HepG2 (cell line): ENCODE measurements at regions of chr18 and their contacts with region 1.

Region 1: GRCh38 chr18:50967714-50968661 is at the start of gene ELAC1:
- DNase-seq: peak; percentile 65
- ATAC-seq: peak; percentile 98
- H3K4me3 ChIP-seq: peak within 1 kb of the TSS; percentile 59 to 84 (median 83)
- H3K27ac ChIP-seq: peak within 1 kb of the TSS; percentile 86
- H3K4me1 ChIP-seq: peaks cover 28% of the 10 kb centered on the region
- H3K27me3 ChIP-seq: no peaks in the 10 kb centered on the region; a peak in 1 of 5 replicates
- CTCF ChIP-seq: peak; percentile 38
- EP300 ChIP-seq: no peak
- POLR2A ChIP-seq: peak; percentile 75 to 83
- RAD21 ChIP-seq: peak; percentile 82
- total RNA-seq, gene ELAC1: 3.6 TPM in 2 replicates

Region 2: GRCh38 chr18:50819728-50820378 is 148.1 kb before region 1 on chr18 and contains the start of gene MRO:
- CTCF ChIA-PET with region 1: no interaction called
- POLR2A ChIA-PET with region 1: no interaction called
- in situ Hi-C with region 1: no loop called
- intact Hi-C with region 1: loop called (anchors 5 kb)
- DNase-seq: peak; percentile 58
- ATAC-seq: peak; percentile 97
- H3K4me3 ChIP-seq: peak within 1 kb of the TSS in 2 of 3 experiments; percentile 21 to 38; a peak in 4 of 6 replicates
- H3K27ac ChIP-seq: no peak within 1 kb of the TSS
- H3K4me1 ChIP-seq: peaks cover 19% of the 10 kb centered on the region
- H3K27me3 ChIP-seq: peaks cover 0 to 6% of the 10 kb centered on the region in 2 experiments; a peak in 1 of 5 replicates
- CTCF ChIP-seq: peak; percentile 98
- EP300 ChIP-seq: no peak
- POLR2A ChIP-seq: no peak
- RAD21 ChIP-seq: peak; percentile 93
- total RNA-seq, gene MRO: not detected in 2 replicates

Region 3: GRCh38 chr18:50878345-50879301 is 89.4 kb before region 1 on chr18 and contains the start of gene ME2:
- CTCF ChIA-PET with region 1: no interaction called
- POLR2A ChIA-PET with region 1: interaction called, 11 read pairs
- in situ Hi-C with region 1: no loop called
- intact Hi-C with region 1: loop called (anchors 2 kb)
- DNase-seq: peak; percentile 72
- ATAC-seq: peak; percentile 98
- H3K4me3 ChIP-seq: peak within 1 kb of the TSS; percentile 81 to 94 (median 90)
- H3K27ac ChIP-seq: peak within 1 kb of the TSS; percentile 70
- H3K4me1 ChIP-seq: peaks cover 32% of the 10 kb centered on the region
- H3K27me3 ChIP-seq: no peaks in the 10 kb centered on the region
- CTCF ChIP-seq: no peak
- EP300 ChIP-seq: no peak
- POLR2A ChIP-seq: peak; percentile 40 to 78; a peak in 3 of 4 replicates
- RAD21 ChIP-seq: no peak
- total RNA-seq, gene ME2: 20.6 and 28.2 TPM in 2 replicates

Region 4: GRCh38 chr18:51029694-51030536 is 61.9 kb after region 1 on chr18 and contains the start of gene SMAD4:
- CTCF ChIA-PET with region 1: no interaction called
- POLR2A ChIA-PET with region 1: interaction called, 27 read pairs
- in situ Hi-C with region 1: loop called (anchors 5 kb)
- intact Hi-C with region 1: loop called (anchors 2 kb)
- DNase-seq: peak; percentile 89
- ATAC-seq: peak; percentile 91
- H3K4me3 ChIP-seq: peak within 1 kb of the TSS; percentile 83 to 91 (median 91)
- H3K27ac ChIP-seq: peak within 1 kb of the TSS; percentile 94
- H3K4me1 ChIP-seq: peaks cover 53% of the 10 kb centered on the region
- H3K27me3 ChIP-seq: no peaks in the 10 kb centered on the region; a peak in 1 of 5 replicates
- CTCF ChIP-seq: no peak; the same call in 1 of the 2 replicates
- EP300 ChIP-seq: no peak
- POLR2A ChIP-seq: peak; percentile 94 to 97
- RAD21 ChIP-seq: peak; percentile 35; the same call in 1 of the 2 replicates
- total RNA-seq, gene SMAD4: 72.0 and 99.1 TPM in 2 replicates

Region 5: GRCh38 chr18:51039138-51040112 is 71.4 kb after region 1 on chr18:
- CTCF ChIA-PET with region 1: no interaction called
- POLR2A ChIA-PET with region 1: interaction called, 21 read pairs
- in situ Hi-C with region 1: loop called (anchors 5 kb)
- intact Hi-C with region 1: loop called (anchors 2 kb)
- DNase-seq: no peak
- ATAC-seq: peak; percentile 37; the same call in 2 of the 3 replicates
- H3K4me3 ChIP-seq: no peak overlapping the region
- H3K27ac ChIP-seq: peak overlapping the region; percentile 78
- H3K4me1 ChIP-seq: peaks cover 66% of the 10 kb centered on the region
- H3K27me3 ChIP-seq: no peaks in the 10 kb centered on the region
- CTCF ChIP-seq: no peak
- EP300 ChIP-seq: no peak
- POLR2A ChIP-seq: no peak
- RAD21 ChIP-seq: no peak

Region 6: DNA sequence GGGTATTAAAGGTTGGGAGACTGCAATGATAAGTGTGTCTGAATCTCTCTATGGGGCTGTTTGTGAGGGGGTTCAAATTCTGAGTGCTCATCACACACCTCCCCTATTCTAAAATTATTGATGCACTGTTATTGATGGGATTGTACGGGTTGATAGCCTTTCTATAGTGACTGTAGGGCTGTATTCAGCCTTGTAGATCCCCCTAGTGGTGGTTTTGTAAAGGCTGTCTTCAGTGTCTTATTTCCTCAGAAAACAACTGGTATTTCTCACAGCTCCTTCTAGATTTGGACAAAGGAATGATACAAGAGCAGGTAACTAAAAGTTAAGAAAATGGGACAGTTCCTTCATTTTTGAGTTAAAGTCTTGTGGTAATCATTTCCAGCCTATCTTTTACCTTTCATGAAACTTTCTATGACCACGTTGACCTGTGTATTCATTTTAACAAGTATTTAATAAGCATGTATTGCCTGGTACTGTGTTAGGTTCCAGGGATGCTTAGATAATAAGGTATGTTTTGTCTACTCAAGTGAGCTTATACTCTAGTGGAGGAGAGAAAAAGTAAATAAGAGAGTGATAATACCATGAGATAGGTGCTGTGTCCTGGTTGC is 83.2 kb after region 1 on chr18:
- CTCF ChIA-PET with region 1: no interaction called
- POLR2A ChIA-PET with region 1: no interaction called
- in situ Hi-C with region 1: no loop called
- intact Hi-C with region 1: loop called (anchors 1 kb)
- DNase-seq: peak; percentile 33
- ATAC-seq: peak; percentile 92
- H3K4me3 ChIP-seq: no peak overlapping the region
- H3K27ac ChIP-seq: no peak overlapping the region
- H3K4me1 ChIP-seq: no peaks in the 10 kb centered on the region
- H3K27me3 ChIP-seq: no peaks in the 10 kb centered on the region; a peak in 1 of 5 replicates
- CTCF ChIP-seq: peak; percentile 73
- EP300 ChIP-seq: no peak
- POLR2A ChIP-seq: no peak
- RAD21 ChIP-seq: peak; percentile 43; the same call in 1 of the 2 replicates